ENCODE measurements at regions of chr10 and their contacts with region 1.

Region 1: DNA sequence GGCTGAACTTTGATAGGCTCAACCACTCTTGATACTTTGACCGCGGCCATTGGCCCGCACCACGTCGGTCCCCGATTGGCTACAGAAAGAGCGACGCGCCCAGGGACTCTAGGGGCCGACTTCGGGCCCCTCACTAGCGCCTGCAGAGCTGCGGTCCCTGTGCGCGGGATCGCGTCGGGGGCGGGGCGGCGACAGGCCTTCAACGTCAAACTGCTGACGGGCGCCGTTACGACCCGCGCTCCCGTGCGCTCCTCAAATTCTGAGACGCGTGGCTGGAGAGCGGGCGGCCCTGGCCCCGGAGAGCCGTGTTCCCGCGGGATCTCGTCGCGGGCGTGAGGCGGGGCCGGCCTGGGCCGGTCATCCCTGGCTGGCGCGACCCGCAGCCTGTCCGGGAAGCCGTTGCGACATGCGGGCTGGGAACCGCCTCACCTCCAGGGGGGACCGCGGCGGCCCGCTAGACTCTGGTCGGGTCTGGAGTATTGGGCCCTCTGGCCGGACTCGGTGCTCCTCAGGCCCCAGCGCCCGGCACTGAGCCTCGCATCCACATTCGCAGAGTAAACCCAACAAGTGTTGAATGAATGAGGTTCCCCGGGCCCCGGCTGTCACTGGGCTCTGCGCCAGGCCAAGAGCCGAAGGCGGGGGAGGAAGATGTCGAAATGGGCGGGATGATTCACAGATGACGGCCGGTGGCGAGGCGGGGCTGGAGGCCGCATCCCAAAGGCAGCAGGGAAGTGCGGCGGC is 644 bp upstream of the SLC25A28 start:
- DNase-seq: peak; percentile 86 to 91
- ATAC-seq: peak; percentile 70 to 89
- H3K4me3 ChIP-seq: peak overlapping the region; percentile 71 to 81 (median 75)
- H3K27ac ChIP-seq: peak overlapping the region; percentile 91 to 97 (median 96)
- H3K4me1 ChIP-seq: peaks cover 37 to 39% of the 10 kb centered on the region in 2 donors
- H3K27me3 ChIP-seq: no peaks in the 10 kb centered on the region
- CTCF ChIP-seq: peak in 3 of 5 experiments; percentile 18 to 20 (median 19)
- POLR2A ChIP-seq: peak; percentile 54 to 89

Region 2: GRCh38 chr10:99395750-99396445 is 225.0 kb before region 1 on chr10:
- in situ Hi-C with region 1: loop called in 3 of 4 experiments (anchors 10 kb)
- intact Hi-C with region 1: no loop called
- DNase-seq: no peak
- ATAC-seq: no peak
- H3K4me3 ChIP-seq: no peak overlapping the region
- H3K27ac ChIP-seq: peak overlapping the region; percentile 2 to 63 (median 48)
- H3K4me1 ChIP-seq: peaks cover 21 to 24% of the 10 kb centered on the region in 2 donors
- H3K27me3 ChIP-seq: no peaks in the 10 kb centered on the region
- CTCF ChIP-seq: no peak
- POLR2A ChIP-seq: no peak

Region 3: GRCh38 chr10:99659031-99659867 is 38.4 kb after region 1 on chr10 and contains the start of gene ENTPD7:
- in situ Hi-C with region 1: no loop called
- intact Hi-C with region 1: loop called (anchors 1 kb)
- DNase-seq: peak; percentile 89 to 90
- ATAC-seq: peak; percentile 97 to 99
- H3K4me3 ChIP-seq: peak within 1 kb of the TSS; percentile 70 to 90 (median 84)
- H3K27ac ChIP-seq: peak within 1 kb of the TSS; percentile 6 to 62 (median 33)
- H3K4me1 ChIP-seq: peaks cover 11 to 13% of the 10 kb centered on the region in 2 donors
- H3K27me3 ChIP-seq: no peaks in the 10 kb centered on the region
- CTCF ChIP-seq: peak in 4 of 5 experiments; percentile 5 to 59 (median 46)
- POLR2A ChIP-seq: no peak
- total RNA-seq, gene ENTPD7: 0.32 to 1.1 (median 0.76) TPM

Region 4: GRCh38 chr10:99711129-99711719 is 90.3 kb after region 1 on chr10:
- in situ Hi-C with region 1: loop called in 1 of 4 experiments (anchors 10 kb)
- intact Hi-C with region 1: no loop called
- DNase-seq: no peak
- ATAC-seq: peak; percentile 54 to 75
- H3K4me3 ChIP-seq: no peak overlapping the region
- H3K27ac ChIP-seq: no peak overlapping the region
- H3K4me1 ChIP-seq: no peaks in the 10 kb centered on the region
- H3K27me3 ChIP-seq: no peaks in the 10 kb centered on the region
- CTCF ChIP-seq: peak in 3 of 5 experiments; percentile 25 to 52 (median 34)
- POLR2A ChIP-seq: no peak

Region 5: DNA sequence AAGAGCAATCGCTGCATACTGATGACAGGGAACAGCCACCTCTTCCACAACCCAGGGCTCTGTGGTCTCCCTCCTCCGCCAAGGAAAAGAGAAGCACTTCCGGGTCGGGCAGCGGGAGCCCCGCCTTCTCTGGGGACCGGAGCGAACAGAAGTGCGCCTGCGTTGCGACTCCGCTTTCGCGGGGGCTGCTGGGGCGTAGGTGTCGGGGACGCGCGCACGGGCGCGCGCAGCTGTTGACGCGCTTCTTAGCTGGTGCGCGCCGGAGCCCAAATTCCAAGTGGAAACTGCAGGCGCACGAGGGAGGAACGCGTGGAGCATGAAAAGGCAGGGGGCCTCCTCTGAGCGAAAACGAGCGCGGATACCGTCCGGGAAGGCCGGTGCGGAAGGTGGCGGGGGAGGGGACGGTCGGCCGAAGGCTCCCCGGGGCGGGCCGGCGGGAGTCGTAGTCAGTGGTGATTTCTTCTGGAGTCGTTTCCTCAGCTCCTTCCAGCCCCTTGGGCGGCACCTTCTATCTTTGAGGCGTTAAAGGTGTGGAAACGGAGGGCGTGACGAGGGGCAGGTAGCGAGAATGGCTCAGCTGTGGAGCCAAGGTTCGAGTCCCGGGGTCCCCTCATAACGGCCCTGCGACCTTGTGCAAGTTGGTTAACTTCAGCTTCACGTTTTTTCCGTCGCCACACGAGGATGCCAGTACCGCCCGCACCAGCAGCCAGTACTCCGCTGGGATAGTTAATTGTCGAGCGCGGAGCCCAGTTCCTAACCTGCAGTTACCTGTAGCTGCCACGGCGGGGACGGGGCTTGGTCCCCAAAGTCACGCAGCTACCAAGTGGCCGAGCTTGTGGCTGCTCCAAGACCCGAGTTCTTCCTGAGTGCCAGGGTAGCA is 111.4 kb after region 1 on chr10 and contains the starts of genes COX15 and CUTC:
- in situ Hi-C with region 1: no loop called
- intact Hi-C with region 1: loop called (anchors 5 kb)
- DNase-seq: peak; percentile 96 to 98
- ATAC-seq: peak; percentile 82 to 83
- H3K4me3 ChIP-seq: peak within 1 kb of the TSS; percentile 82 to 100 (median 97)
- H3K27ac ChIP-seq: peak within 1 kb of the TSS; percentile 95 to 99 (median 99)
- H3K4me1 ChIP-seq: peaks cover 53 to 54% of the 10 kb centered on the region in 2 donors
- H3K27me3 ChIP-seq: no peaks in the 10 kb centered on the region
- CTCF ChIP-seq: peak; percentile 43 to 66 (median 51)
- POLR2A ChIP-seq: peak; percentile 93 to 94
- total RNA-seq, gene COX15: 28.1 to 45.3 (median 32.5) TPM
- total RNA-seq, gene CUTC: 85.2 to 172 (median 126) TPM

Region 6: GRCh38 chr10:100912605-100913469 is 1292.0 kb after region 1 on chr10 and contains the start of gene SLF2:
- in situ Hi-C with region 1: no loop called
- intact Hi-C with region 1: loop called (anchors 10 kb)
- DNase-seq: peak; percentile 98 to 99
- ATAC-seq: peak; percentile 98 to 99
- H3K4me3 ChIP-seq: peak within 1 kb of the TSS; percentile 99 to 100 (median 100)
- H3K27ac ChIP-seq: peak within 1 kb of the TSS; percentile 96 to 99 (median 97)
- H3K4me1 ChIP-seq: peaks cover 31 to 33% of the 10 kb centered on the region in 2 donors
- H3K27me3 ChIP-seq: no peaks in the 10 kb centered on the region
- CTCF ChIP-seq: no peak
- POLR2A ChIP-seq: peak; percentile 92 to 93
- total RNA-seq, gene SLF2: 9.2 to 23.0 (median 20.1) TPM

Region 7: DNA sequence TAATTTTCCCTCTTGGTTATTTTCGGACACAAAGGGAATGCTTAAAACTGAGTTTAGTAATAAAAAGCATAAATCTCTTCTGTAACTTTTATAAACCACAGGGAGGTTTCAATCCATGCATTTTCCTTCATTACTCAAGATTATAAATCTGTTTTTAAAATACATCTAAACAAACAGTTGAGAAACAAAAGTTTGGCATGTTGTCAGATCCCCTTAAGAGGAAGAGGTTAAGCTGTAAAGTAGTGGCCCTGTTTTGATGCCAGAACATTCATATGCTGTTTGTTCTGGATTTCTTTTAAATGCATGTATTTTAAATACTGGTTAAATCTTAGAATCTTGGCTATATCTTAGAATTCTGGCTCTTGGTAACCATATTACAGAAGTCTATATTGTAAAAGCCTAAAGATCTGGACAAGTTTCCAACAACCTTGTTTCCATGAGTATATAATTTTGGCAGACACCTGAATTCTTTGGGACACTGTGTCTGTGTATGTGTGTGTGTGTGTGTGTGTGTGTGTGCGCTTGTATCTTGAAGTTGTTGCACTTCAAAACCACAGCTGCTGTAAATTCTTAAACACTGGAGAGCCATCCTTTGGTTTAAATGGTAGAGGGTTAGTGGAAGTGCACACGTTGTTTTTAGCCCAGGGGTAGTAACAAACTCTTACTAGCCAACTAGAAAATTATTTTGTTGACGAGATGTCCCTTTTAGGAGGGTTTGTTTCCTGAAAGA is 1341.6 kb after region 1 on chr10:
- in situ Hi-C with region 1: no loop called
- intact Hi-C with region 1: no loop called
- DNase-seq: no peak
- ATAC-seq: no peak
- H3K4me3 ChIP-seq: no peak overlapping the region
- H3K27ac ChIP-seq: no peak overlapping the region
- H3K4me1 ChIP-seq: peaks cover 3 to 6% of the 10 kb centered on the region in 2 donors
- H3K27me3 ChIP-seq: no peaks in the 10 kb centered on the region
- CTCF ChIP-seq: no peak
- POLR2A ChIP-seq: no peak

Measured in gastrocnemius medialis (tissue), 4 donors.